ENCODE measurements at regions of chr2 and their contacts with region 1.

Region 1: GRCh38 chr2:223459328-223459939 is 142.7 kb downstream of the SCG2 start:
- DNase-seq: no peak
- ATAC-seq: no peak
- H3K4me3 ChIP-seq: no peak overlapping the region
- H3K27ac ChIP-seq: no peak overlapping the region
- H3K4me1 ChIP-seq: peaks cover 0 to 2% of the 10 kb centered on the region in 2 donors
- H3K27me3 ChIP-seq: no peaks in the 10 kb centered on the region

Region 2: DNA sequence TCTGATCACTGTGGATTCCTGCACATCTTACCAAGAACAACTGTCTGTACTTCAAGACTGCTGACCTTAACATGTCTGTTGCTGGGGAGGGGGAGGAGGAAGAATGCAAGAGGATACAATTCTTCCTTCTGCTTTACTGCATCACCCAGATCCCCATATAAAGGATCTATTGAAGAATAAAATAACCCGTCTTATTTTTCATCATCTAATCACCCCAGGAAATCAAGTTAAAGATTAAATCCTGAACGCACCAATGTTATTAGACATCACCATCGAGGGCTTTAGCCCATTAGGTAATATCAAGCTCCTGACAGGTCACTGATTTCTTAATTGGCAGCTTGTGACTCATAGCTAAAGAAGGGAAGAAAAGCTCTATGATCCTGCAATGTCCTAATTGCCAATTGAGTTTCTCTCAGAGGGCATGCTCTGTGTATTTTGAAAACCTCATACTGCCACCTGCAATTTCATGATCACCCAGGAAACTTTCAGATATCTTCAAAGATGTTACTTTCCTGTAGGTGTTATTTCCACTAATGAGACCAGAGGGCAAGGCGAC is 482.8 kb before region 1 on chr2:
- intact Hi-C with region 1: loop called in 1 of 2 experiments (anchors 10 kb)
- DNase-seq: no peak
- ATAC-seq: no peak
- H3K4me3 ChIP-seq: no peak overlapping the region
- H3K27ac ChIP-seq: no peak overlapping the region
- H3K4me1 ChIP-seq: peaks cover 0 to 2% of the 10 kb centered on the region in 2 donors
- H3K27me3 ChIP-seq: no peaks in the 10 kb centered on the region

Region 3: DNA sequence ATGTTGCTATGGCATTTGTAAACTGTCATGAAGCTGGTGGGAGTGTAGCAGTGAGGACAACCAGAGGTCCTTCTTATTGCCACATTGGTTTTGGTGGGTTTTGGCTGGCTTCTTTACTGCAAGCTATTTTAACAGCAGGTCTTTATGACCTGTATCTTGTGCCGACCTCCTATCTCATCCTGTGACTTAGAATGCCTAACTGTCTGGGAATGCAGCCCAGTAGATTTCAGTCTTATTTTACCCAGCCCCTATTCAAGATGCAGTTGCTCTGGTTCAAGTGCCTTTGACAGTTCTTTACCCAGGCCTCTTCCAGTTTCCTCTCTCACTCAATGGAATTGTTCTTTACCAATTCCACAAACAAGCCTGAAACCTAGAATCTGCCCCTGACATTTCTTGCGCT is 262.4 kb before region 1 on chr2:
- intact Hi-C with region 1: no loop called
- DNase-seq: no peak
- ATAC-seq: no peak
- H3K4me3 ChIP-seq: no peak overlapping the region
- H3K27ac ChIP-seq: no peak overlapping the region
- H3K4me1 ChIP-seq: no peaks in the 10 kb centered on the region
- H3K27me3 ChIP-seq: no peaks in the 10 kb centered on the region